ENCODE measurements at regions of chr3 and their contacts with region 1.

Region 1: GRCh38 chr3:115814778-115815380 is 191.6 kb downstream of the GAP43 start:
- DNase-seq: peak; percentile 39
- CTCF ChIP-seq: peak; percentile 91

Region 2: GRCh38 chr3:115825046-115825445 is 10.2 kb after region 1 on chr3:
- CTCF ChIA-PET with region 1: interaction called, 37 read pairs
- POLR2A ChIA-PET with region 1: no interaction called
- DNase-seq: no peak
- CTCF ChIP-seq: no peak

Measured in GM10248 (cell line).